ENCODE measurements at regions of chr3 and their contacts with region 1.

Region 1: DNA sequence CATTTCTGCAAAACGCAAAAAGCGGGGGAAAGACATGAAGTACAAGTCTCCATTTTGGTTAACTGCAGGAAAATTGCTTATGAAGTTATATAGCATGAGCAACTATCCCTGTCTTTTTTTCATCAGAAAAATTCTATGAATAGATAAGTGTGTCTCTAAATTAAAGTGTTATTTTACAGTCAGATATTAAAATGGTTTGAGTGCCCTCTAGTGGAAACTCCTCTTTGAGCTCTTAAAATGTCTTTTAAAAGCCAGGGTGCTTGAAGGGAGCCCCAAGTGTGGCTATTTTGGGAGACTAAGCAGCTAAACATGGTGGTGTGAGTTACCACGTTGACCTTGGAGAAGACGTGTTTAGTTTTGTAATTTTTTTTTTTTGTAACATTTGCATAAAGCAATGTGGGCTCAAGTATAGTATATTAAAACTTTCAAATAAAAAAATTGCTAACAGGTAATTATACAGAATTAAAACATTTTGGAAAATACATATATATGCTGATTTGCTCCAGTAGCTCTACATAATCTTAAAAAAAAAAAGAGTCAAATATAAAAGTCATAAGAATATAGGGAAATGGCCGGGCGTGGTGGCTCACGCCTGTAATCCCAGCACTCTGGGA is 77.2 kb downstream of the PPP2R3A start:
- DNase-seq: no peak
- H3K4me3 ChIP-seq: no peak overlapping the region
- H3K27ac ChIP-seq: no peak overlapping the region
- H3K4me1 ChIP-seq: no peaks in the 10 kb centered on the region
- H3K27me3 ChIP-seq: no peaks in the 10 kb centered on the region
- CTCF ChIP-seq: peak; percentile 51 to 61 (median 54)
- EP300 ChIP-seq: no peak
- POLR2A ChIP-seq: no peak

Region 2: GRCh38 chr3:135736740-135737139 is 306.0 kb before region 1 on chr3:
- in situ Hi-C with region 1: loop called in 2 of 4 experiments (anchors 25 kb)
- intact Hi-C with region 1: no loop called
- DNase-seq: peak; percentile 38
- H3K4me3 ChIP-seq: no peak overlapping the region
- H3K27ac ChIP-seq: no peak overlapping the region
- H3K4me1 ChIP-seq: no peaks in the 10 kb centered on the region
- H3K27me3 ChIP-seq: no peaks in the 10 kb centered on the region
- CTCF ChIP-seq: peak in 4 of 5 experiments; percentile 24 to 49 (median 38)
- EP300 ChIP-seq: no peak
- POLR2A ChIP-seq: no peak

Region 3: GRCh38 chr3:135918580-135918962 is 124.1 kb before region 1 on chr3:
- in situ Hi-C with region 1: loop called (anchors 5 to 25 kb)
- intact Hi-C with region 1: loop called (anchors 5 kb)
- DNase-seq: no peak
- H3K4me3 ChIP-seq: no peak overlapping the region
- H3K27ac ChIP-seq: no peak overlapping the region
- H3K4me1 ChIP-seq: no peaks in the 10 kb centered on the region
- H3K27me3 ChIP-seq: no peaks in the 10 kb centered on the region
- CTCF ChIP-seq: peak; percentile 41 to 60 (median 50)
- EP300 ChIP-seq: no peak
- POLR2A ChIP-seq: no peak

Region 4: DNA sequence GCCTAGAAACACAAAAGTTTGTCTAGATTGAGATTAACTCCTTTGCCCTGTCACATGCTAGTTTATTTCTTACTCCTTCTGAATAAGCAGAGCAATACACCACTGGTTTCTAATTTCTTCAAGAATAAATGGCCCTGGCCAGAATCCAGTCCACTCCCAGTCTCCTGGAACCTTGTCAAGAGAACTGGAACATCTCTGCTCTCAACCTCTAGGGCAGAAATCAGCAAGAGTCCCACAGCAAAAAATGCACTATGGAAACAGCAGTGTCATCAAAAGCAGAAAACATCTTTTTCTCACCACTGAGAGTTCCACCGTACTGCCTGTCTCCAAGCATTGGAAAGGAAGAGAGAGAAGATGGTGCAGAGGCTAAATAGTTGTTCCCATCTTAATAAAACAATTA is 113.0 kb before region 1 on chr3:
- in situ Hi-C with region 1: loop called (anchors 5 to 25 kb)
- intact Hi-C with region 1: loop called (anchors 5 kb)
- DNase-seq: peak; percentile 15
- H3K4me3 ChIP-seq: no peak overlapping the region
- H3K27ac ChIP-seq: peak overlapping the region in 3 of 4 donors; percentile 18 to 35 (median 32)
- H3K4me1 ChIP-seq: peaks cover 0 to 10% (median 7%) of the 10 kb centered on the region in 4 donors
- H3K27me3 ChIP-seq: no peaks in the 10 kb centered on the region
- CTCF ChIP-seq: no peak
- EP300 ChIP-seq: no peak
- POLR2A ChIP-seq: no peak

Region 5: DNA sequence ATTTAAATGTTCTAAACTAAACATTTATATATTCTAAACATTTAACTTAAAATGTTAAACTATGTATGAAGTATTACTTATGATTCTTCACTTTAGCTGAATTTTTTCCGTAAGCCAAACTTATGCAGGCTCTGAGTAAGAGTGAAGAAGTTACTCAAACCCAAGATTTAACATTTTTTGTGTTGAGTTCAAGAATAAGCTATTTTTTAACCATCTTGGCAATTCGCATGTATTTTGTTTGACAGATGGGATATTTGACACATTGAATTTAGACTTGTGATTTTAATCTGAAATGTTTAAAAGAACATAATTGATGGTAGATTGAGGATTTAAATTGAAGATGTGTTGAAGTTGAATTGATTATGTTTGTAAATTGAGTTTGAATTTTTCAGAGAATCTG is 91.8 kb before region 1 on chr3:
- in situ Hi-C with region 1: no loop called
- intact Hi-C with region 1: loop called (anchors 10 kb)
- DNase-seq: no peak
- H3K4me3 ChIP-seq: no peak overlapping the region
- H3K27ac ChIP-seq: no peak overlapping the region
- H3K4me1 ChIP-seq: no peaks in the 10 kb centered on the region
- H3K27me3 ChIP-seq: no peaks in the 10 kb centered on the region
- CTCF ChIP-seq: no peak
- EP300 ChIP-seq: no peak
- POLR2A ChIP-seq: no peak

Region 6: DNA sequence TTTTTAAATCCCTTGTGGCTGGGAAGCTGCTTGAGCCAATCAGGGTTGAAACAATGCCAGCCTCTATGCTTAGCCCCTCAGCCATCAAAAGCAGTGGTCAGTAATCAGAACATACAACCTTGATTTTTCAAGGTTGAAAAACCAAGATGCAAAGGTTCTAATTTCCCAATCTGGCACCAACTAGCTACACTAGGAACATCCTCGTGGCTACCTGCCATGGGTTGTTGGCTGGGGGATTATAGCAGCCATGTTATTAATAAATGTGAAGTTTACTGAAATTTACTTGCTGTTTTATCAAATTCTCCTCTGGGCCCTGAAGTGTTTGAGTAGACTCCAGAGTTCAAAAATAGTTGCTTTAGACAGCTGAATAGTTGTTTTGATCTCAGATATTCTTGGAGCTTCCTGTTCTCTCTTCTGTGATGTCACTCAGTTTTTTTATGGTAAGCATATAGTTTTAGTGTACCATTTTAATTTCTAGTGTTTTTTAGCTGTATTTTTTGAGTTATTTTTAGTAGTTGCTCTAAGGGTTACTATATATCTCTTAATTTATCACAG is 239.3 kb after region 1 on chr3:
- in situ Hi-C with region 1: no loop called
- intact Hi-C with region 1: no loop called
- DNase-seq: no peak
- H3K4me3 ChIP-seq: no peak overlapping the region
- H3K27ac ChIP-seq: no peak overlapping the region
- H3K4me1 ChIP-seq: no peaks in the 10 kb centered on the region
- H3K27me3 ChIP-seq: no peaks in the 10 kb centered on the region
- CTCF ChIP-seq: no peak
- EP300 ChIP-seq: no peak
- POLR2A ChIP-seq: no peak

Measured in transverse colon (tissue), 4 donors.